Activated B cell treated with CpG ODN at 0.5 μM for 24 hours (primary cell): ENCODE measurements at regions of chr15 and their contacts with region 1.

Region 1: DNA sequence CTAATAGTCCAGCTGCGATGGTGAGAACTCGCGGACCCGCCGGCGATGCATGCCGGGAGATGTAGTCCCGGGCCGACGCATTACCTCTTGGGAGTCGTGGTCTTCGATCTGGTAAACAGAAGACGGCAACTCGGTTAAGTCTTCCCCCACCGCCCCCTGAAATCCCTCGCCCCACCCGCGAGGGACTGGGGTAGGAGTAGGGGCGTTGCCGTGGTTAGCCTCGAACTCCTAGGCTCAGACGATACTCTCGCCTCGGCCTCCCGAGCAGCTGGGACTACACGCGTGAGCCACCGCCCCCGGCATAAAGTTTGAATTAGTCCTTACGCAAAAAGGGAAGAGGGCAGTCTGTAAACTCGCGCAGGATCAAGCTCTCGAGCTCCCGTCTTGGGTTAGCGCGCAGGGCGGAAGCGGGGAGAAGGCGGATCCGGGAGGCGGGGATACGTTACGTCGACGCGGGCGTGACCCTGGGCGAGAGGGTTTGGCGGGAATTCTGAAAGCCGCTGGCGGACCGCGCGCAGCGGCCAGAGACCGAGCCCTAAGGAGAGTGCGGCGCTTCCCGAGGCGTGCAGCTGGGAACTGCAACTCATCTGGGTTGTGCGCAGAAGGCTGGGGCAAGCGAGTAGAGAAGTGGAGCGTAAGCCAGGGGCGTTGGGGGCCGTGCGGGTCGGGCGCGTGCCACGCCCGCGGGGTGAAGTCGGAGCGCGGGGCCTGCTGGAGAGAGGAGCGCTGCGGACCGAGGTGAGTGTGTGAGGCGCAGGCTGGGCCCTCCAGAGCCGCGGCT is at the start of gene RAD51:
- DNase-seq: peak; percentile 88
- ATAC-seq: peak; percentile 90
- H3K4me3 Mint-ChIP-seq: peak within 1 kb of the TSS; percentile 99
- H3K27ac Mint-ChIP-seq: peak within 1 kb of the TSS; percentile 98
- H3K4me1 Mint-ChIP-seq: peaks cover 25% of the 10 kb centered on the region
- H3K27me3 Mint-ChIP-seq: no peaks in the 10 kb centered on the region
- CTCF ChIP-seq: no peak
- total RNA-seq, gene RAD51: 2.6 and 4.1 TPM in 2 replicates

Region 2: GRCh38 chr15:40338041-40338657 is 356.7 kb before region 1 on chr15:
- CTCF ChIA-PET with region 1: no interaction called
- POLR2A ChIA-PET with region 1: no interaction called
- intact Hi-C with region 1: no loop called
- DNase-seq: peak; percentile 67
- ATAC-seq: peak; percentile 96
- H3K4me3 Mint-ChIP-seq: no peak overlapping the region
- H3K27ac Mint-ChIP-seq: no peak overlapping the region
- H3K4me1 Mint-ChIP-seq: peaks cover 24% of the 10 kb centered on the region
- H3K27me3 Mint-ChIP-seq: no peaks in the 10 kb centered on the region
- CTCF ChIP-seq: peak; percentile 17

Region 3: GRCh38 chr15:40593588-40594428 is 101.1 kb before region 1 on chr15 and contains the start of gene KNL1:
- CTCF ChIA-PET with region 1: interaction called, 5 read pairs
- POLR2A ChIA-PET with region 1: interaction called, 20 read pairs
- intact Hi-C with region 1: loop called (anchors 1 kb)
- DNase-seq: peak; percentile 84
- ATAC-seq: peak; percentile 83
- H3K4me3 Mint-ChIP-seq: peak within 1 kb of the TSS; percentile 95
- H3K27ac Mint-ChIP-seq: peak within 1 kb of the TSS; percentile 99
- H3K4me1 Mint-ChIP-seq: peaks cover 21% of the 10 kb centered on the region
- H3K27me3 Mint-ChIP-seq: peaks cover 2% of the 10 kb centered on the region
- CTCF ChIP-seq: no peak
- total RNA-seq, gene KNL1: 5.1 and 7.7 TPM in 2 replicates

Region 4: DNA sequence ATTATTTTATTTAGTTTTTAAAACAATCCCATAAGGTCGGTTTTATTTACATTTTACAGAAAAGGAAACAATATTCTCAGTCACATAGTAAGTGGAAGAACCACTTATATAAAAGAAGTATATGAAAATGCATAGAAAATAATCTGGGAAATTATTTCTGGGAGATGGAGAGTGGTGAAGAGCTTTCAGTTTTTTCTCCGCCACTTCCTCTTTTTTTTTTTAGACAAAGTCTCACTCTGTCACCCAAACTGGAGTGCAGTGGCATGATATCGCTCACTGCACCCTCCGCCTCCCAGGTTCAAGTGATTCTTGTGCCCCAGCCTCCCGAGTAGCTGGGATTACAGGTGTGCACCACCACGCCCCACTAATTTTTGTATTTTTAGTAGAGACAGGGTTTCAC is 21.3 kb after region 1 on chr15:
- CTCF ChIA-PET with region 1: no interaction called
- POLR2A ChIA-PET with region 1: no interaction called
- intact Hi-C with region 1: no loop called
- DNase-seq: no peak
- ATAC-seq: no peak
- H3K4me3 Mint-ChIP-seq: no peak overlapping the region
- H3K27ac Mint-ChIP-seq: no peak overlapping the region
- H3K4me1 Mint-ChIP-seq: no peaks in the 10 kb centered on the region
- H3K27me3 Mint-ChIP-seq: no peaks in the 10 kb centered on the region
- CTCF ChIP-seq: no peak

Region 5: DNA sequence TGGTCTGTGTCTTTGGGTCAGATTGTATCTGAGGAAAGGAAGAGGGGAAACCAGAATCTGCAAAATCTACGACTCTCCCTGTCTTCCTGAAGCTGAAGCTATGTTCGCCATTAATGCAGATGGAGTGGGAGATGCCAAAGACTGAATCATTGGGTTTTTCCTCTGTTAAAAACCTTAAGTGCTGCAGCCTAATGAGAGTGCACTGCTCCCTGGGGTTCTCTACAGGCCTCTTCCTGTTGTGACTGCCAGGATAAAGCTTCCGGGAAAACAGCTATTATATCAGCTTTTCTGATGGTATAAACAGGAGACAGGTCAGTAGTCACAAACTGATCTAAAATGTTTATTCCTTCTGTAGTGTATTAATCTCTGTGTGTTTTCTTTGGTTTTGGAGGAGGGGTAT is 36.2 kb after region 1 on chr15:
- CTCF ChIA-PET with region 1: no interaction called
- POLR2A ChIA-PET with region 1: interaction called, 10 read pairs
- intact Hi-C with region 1: no loop called
- DNase-seq: no peak
- ATAC-seq: no peak
- H3K4me3 Mint-ChIP-seq: no peak overlapping the region
- H3K27ac Mint-ChIP-seq: no peak overlapping the region
- H3K4me1 Mint-ChIP-seq: no peaks in the 10 kb centered on the region
- H3K27me3 Mint-ChIP-seq: no peaks in the 10 kb centered on the region
- CTCF ChIP-seq: no peak

Region 6: GRCh38 chr15:40763801-40764732 is 69.2 kb after region 1 on chr15 and contains the start of gene GCHFR:
- CTCF ChIA-PET with region 1: no interaction called
- POLR2A ChIA-PET with region 1: interaction called, 49 read pairs
- intact Hi-C with region 1: loop called (anchors 1 kb)
- DNase-seq: peak; percentile 64
- ATAC-seq: peak; percentile 72
- H3K4me3 Mint-ChIP-seq: peak within 1 kb of the TSS; percentile 85
- H3K27ac Mint-ChIP-seq: peak within 1 kb of the TSS; percentile 68
- H3K4me1 Mint-ChIP-seq: peaks cover 36% of the 10 kb centered on the region
- H3K27me3 Mint-ChIP-seq: no peaks in the 10 kb centered on the region
- CTCF ChIP-seq: no peak
- total RNA-seq, gene GCHFR: 19.5 and 21.1 TPM in 2 replicates

Region 7: GRCh38 chr15:40807028-40807887 is 112.4 kb after region 1 on chr15 and contains the starts of genes DNAJC17 and ZFYVE19:
- CTCF ChIA-PET with region 1: no interaction called
- POLR2A ChIA-PET with region 1: interaction called, 13 read pairs
- intact Hi-C with region 1: loop called (anchors 1 kb)
- DNase-seq: peak; percentile 87
- ATAC-seq: peak; percentile 96
- H3K4me3 Mint-ChIP-seq: peak within 1 kb of the TSS; percentile 99
- H3K27ac Mint-ChIP-seq: peak within 1 kb of the TSS; percentile 100
- H3K4me1 Mint-ChIP-seq: peaks cover 24% of the 10 kb centered on the region
- H3K27me3 Mint-ChIP-seq: no peaks in the 10 kb centered on the region
- CTCF ChIP-seq: no peak
- total RNA-seq, gene DNAJC17: 43.1 and 51.0 TPM in 2 replicates
- total RNA-seq, gene ZFYVE19: 23.2 and 25.2 TPM in 2 replicates

Region 8: GRCh38 chr15:40830884-40831283 is 136.0 kb after region 1 on chr15:
- CTCF ChIA-PET with region 1: no interaction called
- POLR2A ChIA-PET with region 1: no interaction called
- intact Hi-C with region 1: no loop called
- DNase-seq: no peak
- ATAC-seq: no peak
- H3K4me3 Mint-ChIP-seq: no peak overlapping the region
- H3K27ac Mint-ChIP-seq: no peak overlapping the region
- H3K4me1 Mint-ChIP-seq: no peaks in the 10 kb centered on the region
- H3K27me3 Mint-ChIP-seq: no peaks in the 10 kb centered on the region
- CTCF ChIP-seq: no peak